ENCODE measurements at regions of chr15 and their contacts with region 1.

Region 1: DNA sequence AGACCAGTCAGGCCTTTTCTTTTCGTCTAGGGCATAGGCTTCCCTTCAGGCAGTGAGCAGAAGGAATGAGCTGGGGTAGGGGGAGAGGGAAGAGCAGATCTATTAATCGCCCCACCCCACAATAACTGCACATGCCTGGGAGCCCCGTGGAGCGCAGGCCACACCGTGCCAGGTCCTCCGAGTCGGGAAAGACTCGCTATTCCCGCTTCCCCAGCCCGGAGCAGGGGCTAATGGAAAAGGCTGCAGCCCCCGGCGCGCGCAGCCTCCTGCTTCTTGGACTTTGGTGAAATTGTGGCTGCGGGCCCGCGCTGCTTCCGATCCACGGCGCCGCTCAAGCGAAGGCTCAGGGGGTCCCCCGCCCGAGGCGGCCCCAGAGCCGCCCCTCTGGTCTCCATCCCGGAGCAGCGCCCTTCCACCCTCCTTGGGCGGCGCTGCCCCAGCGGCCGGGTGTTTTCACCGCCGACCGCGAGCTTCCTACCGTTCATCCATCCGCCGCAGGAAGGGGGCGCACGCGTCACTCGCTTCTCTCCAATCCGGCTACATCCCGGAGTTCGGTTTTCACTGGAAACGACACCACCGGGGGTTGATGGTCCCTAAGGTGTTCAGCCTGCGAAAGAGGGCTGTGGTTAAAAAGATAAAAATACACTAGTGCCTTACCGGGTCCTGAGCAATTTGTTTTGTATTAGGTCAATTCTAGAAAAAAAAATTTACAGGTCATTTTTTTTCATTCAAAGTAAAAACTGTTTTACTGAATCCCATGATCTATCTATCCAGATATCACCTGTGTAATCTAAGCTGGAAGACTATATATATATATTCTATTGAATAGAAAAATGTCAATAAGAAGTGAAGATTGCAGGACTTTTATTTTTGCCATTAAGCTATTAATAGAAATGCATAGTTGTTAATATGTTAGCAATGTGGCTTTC is 4.4 kb upstream of the SYNM start:
- DNase-seq: peak; percentile 71
- H3K4me3 Mint-ChIP-seq: peak overlapping the region; percentile 39
- H3K27ac Mint-ChIP-seq: no peak overlapping the region
- H3K4me1 Mint-ChIP-seq: no peaks in the 10 kb centered on the region
- H3K27me3 Mint-ChIP-seq: no peaks in the 10 kb centered on the region
- CTCF ChIP-seq: peak; percentile 83

Region 2: GRCh38 chr15:99090011-99090699 is 10.4 kb before region 1 on chr15:
- CTCF ChIA-PET with region 1: interaction called, 28 read pairs
- POLR2A ChIA-PET with region 1: no interaction called
- intact Hi-C with region 1: no loop called
- DNase-seq: no peak
- H3K4me3 Mint-ChIP-seq: no peak overlapping the region
- H3K27ac Mint-ChIP-seq: no peak overlapping the region
- H3K4me1 Mint-ChIP-seq: no peaks in the 10 kb centered on the region
- H3K27me3 Mint-ChIP-seq: peaks cover 30% of the 10 kb centered on the region
- CTCF ChIP-seq: no peak

Region 3: GRCh38 chr15:99110581-99111320 is 10.2 kb after region 1 on chr15:
- CTCF ChIA-PET with region 1: interaction called, 30 read pairs
- POLR2A ChIA-PET with region 1: interaction called, 3 read pairs
- intact Hi-C with region 1: no loop called
- DNase-seq: no peak
- H3K4me3 Mint-ChIP-seq: no peak overlapping the region
- H3K27ac Mint-ChIP-seq: peak overlapping the region; percentile 40
- H3K4me1 Mint-ChIP-seq: peaks cover 6% of the 10 kb centered on the region
- H3K27me3 Mint-ChIP-seq: no peaks in the 10 kb centered on the region
- CTCF ChIP-seq: no peak

Region 4: GRCh38 chr15:99123706-99124451 is 23.4 kb after region 1 on chr15:
- CTCF ChIA-PET with region 1: interaction called, 45 read pairs
- POLR2A ChIA-PET with region 1: interaction called, 3 read pairs
- intact Hi-C with region 1: no loop called
- DNase-seq: peak; percentile 95
- H3K4me3 Mint-ChIP-seq: peak overlapping the region; percentile 68
- H3K27ac Mint-ChIP-seq: peak overlapping the region; percentile 70
- H3K4me1 Mint-ChIP-seq: peaks cover 19% of the 10 kb centered on the region
- H3K27me3 Mint-ChIP-seq: no peaks in the 10 kb centered on the region
- CTCF ChIP-seq: no peak

Region 5: DNA sequence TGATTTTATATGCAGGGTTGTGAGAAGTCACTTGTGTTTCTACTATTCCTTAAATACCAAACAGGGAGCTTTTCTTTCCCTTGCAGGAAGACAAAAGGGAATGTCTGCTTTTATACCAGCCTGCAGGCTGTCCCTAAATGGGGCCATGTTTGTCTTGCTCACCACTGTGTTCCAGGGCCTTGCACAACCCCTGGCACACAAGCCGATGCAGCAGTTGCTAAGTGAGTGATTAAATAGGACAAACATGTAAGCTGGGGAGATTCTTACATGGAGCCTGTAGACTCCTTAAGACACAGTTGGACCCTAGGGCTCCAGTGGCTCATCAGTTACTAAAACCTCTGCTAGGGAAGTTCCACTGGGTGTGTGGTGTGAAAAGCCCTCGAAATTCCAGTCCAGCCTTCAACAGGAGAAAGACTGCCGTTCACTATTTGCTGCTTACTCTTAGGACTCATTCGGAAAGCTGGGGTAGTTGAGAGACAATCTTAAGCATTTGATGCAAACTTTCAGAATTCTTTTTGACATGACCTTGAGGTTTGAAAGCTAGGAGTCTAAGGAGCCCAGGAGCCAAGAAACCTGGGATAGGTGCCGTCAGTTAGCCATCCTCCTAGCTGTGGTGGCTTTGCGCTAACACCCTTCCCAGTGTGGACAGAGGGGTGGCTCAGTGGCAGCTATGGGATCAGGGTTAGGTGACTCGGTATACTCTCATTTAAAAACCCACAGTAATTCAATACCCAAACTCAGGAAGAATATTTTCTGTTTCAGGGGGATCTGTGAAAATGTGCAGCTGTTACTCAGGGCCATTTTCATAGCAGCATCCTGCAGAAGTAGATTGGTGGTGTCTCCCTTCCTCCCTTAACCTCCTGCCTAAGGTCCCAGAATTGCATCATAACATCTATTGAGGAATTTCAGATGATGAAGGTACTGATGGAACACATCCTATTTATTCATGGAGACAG is 43.4 kb after region 1 on chr15:
- CTCF ChIA-PET with region 1: interaction called, 10 read pairs
- POLR2A ChIA-PET with region 1: no interaction called
- intact Hi-C with region 1: no loop called
- DNase-seq: peak; percentile 64
- H3K4me3 Mint-ChIP-seq: no peak overlapping the region
- H3K27ac Mint-ChIP-seq: no peak overlapping the region
- H3K4me1 Mint-ChIP-seq: no peaks in the 10 kb centered on the region
- H3K27me3 Mint-ChIP-seq: no peaks in the 10 kb centered on the region
- CTCF ChIP-seq: no peak

Region 6: DNA sequence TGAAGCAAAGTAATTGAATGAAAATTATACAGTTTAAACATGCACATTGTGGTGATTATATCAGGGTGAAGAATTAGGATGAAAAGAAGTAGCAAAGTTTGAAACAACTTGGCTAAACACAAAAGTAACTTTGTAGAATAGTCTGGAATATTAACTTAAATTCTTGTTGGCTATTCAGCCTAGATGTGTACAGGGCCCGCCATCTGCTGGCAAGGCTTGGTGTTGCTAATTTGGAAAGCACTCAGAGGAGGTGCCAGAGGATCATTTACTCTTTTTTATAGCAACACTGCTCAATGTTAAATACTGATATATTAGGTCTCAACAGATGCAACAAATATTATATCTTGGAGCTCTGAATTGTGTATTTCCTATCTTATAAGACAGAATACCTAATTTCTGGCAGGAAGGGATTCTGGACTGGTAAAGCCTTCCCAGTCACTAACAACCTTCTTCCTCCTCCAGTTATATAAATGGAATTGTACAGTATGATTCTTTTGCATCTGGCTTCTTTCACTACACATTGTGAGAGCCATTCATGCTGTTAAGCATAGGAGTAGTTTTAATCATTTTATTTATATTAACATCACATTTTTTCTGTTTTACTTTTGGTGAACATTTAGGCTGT is 112.8 kb after region 1 on chr15:
- CTCF ChIA-PET with region 1: interaction called, 162 read pairs
- POLR2A ChIA-PET with region 1: interaction called, 4 read pairs
- intact Hi-C with region 1: loop called (anchors 1 kb)
- DNase-seq: peak; percentile 64
- H3K4me3 Mint-ChIP-seq: no peak overlapping the region
- H3K27ac Mint-ChIP-seq: no peak overlapping the region
- H3K4me1 Mint-ChIP-seq: peaks cover 6% of the 10 kb centered on the region
- H3K27me3 Mint-ChIP-seq: no peaks in the 10 kb centered on the region
- CTCF ChIP-seq: peak; percentile 85

Measured in MCF 10A (cell line).